Activated naive CD4-positive, alpha-beta T cell treated with anti-CD3 and anti-CD28 coated beads for 36 hours (primary cell): ENCODE measurements at regions of chr6 and their contacts with region 1.

Region 1: DNA sequence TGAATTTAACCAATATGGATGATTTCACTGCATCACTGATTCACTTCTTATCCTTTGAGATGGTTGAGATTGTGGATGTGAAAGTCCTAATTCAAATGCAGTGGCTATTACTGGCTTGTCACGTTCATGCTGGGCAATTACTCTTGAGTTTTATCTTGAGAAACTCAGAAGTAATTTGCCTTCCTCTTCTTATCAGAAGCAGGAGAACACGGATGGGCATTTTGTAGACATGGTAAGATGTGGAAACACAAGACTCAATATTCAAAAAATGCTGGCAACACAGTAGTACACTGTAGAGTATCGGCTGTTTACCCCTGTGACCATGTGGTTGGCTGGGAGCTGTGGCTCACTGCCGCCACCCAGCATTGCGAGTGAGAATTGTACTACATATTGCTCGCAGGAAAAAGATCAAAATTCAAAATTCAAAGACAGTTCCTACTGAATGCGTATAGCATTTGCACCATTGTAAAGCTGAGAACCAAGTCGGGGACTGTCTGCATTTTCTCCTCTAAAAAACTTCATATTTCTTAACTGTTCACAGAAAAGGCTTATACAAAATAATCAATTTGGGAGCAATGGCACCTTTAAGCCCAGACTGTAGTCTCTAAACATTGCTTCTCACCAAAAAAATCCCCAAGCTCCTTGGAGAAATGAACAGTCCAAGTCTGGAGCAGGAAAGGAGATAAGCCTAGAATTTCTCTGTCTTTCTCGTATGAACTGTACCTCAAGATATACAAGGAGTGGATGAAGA is 61.9 kb upstream of the ELOVL5 start:
- DNase-seq: peak; percentile 70
- H3K4me3 Mint-ChIP-seq: no peak overlapping the region
- H3K27ac Mint-ChIP-seq: no peak overlapping the region
- H3K4me1 Mint-ChIP-seq: no peaks in the 10 kb centered on the region
- H3K27me3 Mint-ChIP-seq: no peaks in the 10 kb centered on the region

Region 2: DNA sequence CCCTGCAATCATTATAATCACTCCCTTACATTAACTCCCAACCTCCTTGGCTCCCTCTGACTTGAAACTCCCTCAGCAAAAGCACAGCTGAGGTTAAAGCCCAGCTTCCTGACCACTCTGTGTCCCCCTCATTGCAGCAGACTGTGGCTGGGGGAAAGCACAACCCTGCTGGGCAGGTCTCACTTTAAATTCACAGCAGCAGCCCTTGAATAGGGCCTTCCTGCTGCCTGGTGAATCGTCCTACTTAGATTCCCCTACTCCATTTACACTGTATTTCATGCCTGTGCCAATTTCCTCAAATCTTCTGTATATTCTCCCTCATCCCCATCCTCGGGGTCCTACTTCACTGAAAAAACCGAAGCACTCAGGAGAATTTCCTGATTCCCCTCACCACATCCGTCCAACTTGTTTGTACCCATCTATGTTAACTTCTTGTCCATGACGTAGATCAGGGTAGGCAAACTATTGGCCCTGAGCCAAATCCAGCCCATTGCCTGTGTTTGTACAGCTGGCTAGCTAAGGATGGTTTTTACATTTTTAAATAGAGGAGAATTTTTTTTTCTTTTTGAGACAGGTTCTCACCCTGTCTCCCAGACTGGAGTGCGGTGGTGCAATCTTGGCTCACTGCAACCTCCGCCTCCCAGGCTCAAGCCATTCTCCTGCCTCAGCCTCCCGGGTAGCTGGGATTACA is 230.6 kb before region 1 on chr6:
- CTCF ChIA-PET with region 1: interaction called, 93 read pairs
- intact Hi-C with region 1: loop called (anchors 1 kb)
- DNase-seq: peak; percentile 55
- H3K4me3 Mint-ChIP-seq: no peak overlapping the region
- H3K27ac Mint-ChIP-seq: no peak overlapping the region
- H3K4me1 Mint-ChIP-seq: peaks cover 12% of the 10 kb centered on the region
- H3K27me3 Mint-ChIP-seq: no peaks in the 10 kb centered on the region

Region 3: DNA sequence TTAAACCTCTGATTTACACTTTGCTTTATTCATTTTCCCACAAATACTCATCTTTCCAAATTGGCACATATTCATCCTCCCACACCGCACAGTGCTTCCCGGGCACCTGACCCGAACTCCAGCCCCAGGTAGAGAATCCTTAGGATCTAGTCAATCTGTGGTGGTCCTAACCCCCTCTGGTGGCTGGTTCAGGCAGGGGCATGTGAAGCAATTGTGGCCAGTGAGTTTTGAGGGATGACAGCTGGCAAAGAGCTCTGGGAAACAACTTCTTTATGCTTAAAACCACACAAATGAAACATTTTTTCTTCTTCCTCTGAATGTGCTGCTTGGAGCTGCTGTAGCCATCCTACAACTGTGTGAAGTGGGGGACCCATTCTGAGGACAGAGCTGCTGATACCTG is 116.6 kb before region 1 on chr6:
- CTCF ChIA-PET with region 1: interaction called, 3 read pairs
- intact Hi-C with region 1: loop called (anchors 1 kb)
- DNase-seq: no peak
- H3K4me3 Mint-ChIP-seq: no peak overlapping the region
- H3K27ac Mint-ChIP-seq: no peak overlapping the region
- H3K4me1 Mint-ChIP-seq: peaks cover 65% of the 10 kb centered on the region
- H3K27me3 Mint-ChIP-seq: no peaks in the 10 kb centered on the region

Region 4: DNA sequence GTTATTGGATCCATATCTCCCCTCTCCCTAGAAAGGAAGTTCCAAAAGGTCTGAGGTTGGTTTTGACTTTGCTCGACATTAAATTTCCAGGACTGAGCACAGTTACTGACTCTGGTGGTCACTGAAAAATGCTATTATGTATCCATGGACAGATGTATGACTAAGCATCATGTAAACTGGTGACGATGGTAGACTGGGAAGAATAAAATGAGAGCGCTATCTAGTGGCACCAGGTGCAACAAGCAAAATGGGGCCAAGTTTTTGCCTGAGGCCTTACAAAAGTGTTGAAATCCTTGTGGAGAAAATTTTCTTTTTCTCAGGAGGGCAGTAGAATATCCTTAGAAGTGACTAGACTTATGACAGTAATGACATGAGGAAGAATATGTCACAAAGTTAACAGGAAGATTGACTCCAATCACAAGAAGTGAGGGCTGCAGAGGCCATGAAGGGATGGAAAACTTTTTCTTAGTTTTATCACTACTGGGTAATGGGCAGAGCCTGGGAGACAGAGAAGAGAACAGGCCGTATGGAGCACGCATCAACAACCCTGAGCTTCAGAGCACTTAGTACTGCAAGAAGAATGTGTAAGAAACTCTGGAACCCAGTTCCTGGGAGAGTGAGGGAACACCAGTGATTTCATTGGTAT is 27.0 kb after region 1 on chr6:
- CTCF ChIA-PET with region 1: interaction called, 6 read pairs
- intact Hi-C with region 1: loop called (anchors 1 kb)
- DNase-seq: peak; percentile 48
- H3K4me3 Mint-ChIP-seq: no peak overlapping the region
- H3K27ac Mint-ChIP-seq: no peak overlapping the region
- H3K4me1 Mint-ChIP-seq: peaks cover 21% of the 10 kb centered on the region
- H3K27me3 Mint-ChIP-seq: peaks cover 3% of the 10 kb centered on the region